ENCODE measurements at regions of chr1 and their contacts with region 1.

Region 1: GRCh38 chr1:22223176-22223575 is 80.3 kb upstream of the WNT4 start:
- DNase-seq: peak in 1 of 5 donors; percentile 11
- H3K4me3 ChIP-seq: no peak overlapping the region
- H3K27ac ChIP-seq: no peak overlapping the region
- H3K4me1 ChIP-seq: no peaks in the 10 kb centered on the region
- H3K27me3 ChIP-seq: no peaks in the 10 kb centered on the region
- CTCF ChIP-seq: no peak
- EP300 ChIP-seq: no peak
- POLR2A ChIP-seq: no peak

Region 2: GRCh38 chr1:22077728-22078127 is 145.4 kb before region 1 on chr1:
- intact Hi-C with region 1: no loop called
- DNase-seq: no peak
- H3K4me3 ChIP-seq: no peak overlapping the region
- H3K27ac ChIP-seq: no peak overlapping the region
- H3K4me1 ChIP-seq: peaks cover 12% of the 10 kb centered on the region
- H3K27me3 ChIP-seq: no peaks in the 10 kb centered on the region
- CTCF ChIP-seq: no peak
- EP300 ChIP-seq: no peak
- POLR2A ChIP-seq: no peak

Region 3: GRCh38 chr1:22163137-22163536 is 60.0 kb before region 1 on chr1:
- intact Hi-C with region 1: no loop called
- DNase-seq: no peak
- H3K4me3 ChIP-seq: no peak overlapping the region
- H3K27ac ChIP-seq: no peak overlapping the region
- H3K4me1 ChIP-seq: peaks cover 2% of the 10 kb centered on the region
- H3K27me3 ChIP-seq: no peaks in the 10 kb centered on the region
- CTCF ChIP-seq: no peak
- EP300 ChIP-seq: no peak
- POLR2A ChIP-seq: no peak

Region 4: GRCh38 chr1:22350171-22350909 is 127.2 kb after region 1 on chr1:
- intact Hi-C with region 1: no loop called
- DNase-seq: no peak
- H3K4me3 ChIP-seq: no peak overlapping the region
- H3K27ac ChIP-seq: no peak overlapping the region
- H3K4me1 ChIP-seq: peaks cover 1% of the 10 kb centered on the region
- H3K27me3 ChIP-seq: no peaks in the 10 kb centered on the region
- CTCF ChIP-seq: no peak
- EP300 ChIP-seq: no peak
- POLR2A ChIP-seq: no peak

Region 5: DNA sequence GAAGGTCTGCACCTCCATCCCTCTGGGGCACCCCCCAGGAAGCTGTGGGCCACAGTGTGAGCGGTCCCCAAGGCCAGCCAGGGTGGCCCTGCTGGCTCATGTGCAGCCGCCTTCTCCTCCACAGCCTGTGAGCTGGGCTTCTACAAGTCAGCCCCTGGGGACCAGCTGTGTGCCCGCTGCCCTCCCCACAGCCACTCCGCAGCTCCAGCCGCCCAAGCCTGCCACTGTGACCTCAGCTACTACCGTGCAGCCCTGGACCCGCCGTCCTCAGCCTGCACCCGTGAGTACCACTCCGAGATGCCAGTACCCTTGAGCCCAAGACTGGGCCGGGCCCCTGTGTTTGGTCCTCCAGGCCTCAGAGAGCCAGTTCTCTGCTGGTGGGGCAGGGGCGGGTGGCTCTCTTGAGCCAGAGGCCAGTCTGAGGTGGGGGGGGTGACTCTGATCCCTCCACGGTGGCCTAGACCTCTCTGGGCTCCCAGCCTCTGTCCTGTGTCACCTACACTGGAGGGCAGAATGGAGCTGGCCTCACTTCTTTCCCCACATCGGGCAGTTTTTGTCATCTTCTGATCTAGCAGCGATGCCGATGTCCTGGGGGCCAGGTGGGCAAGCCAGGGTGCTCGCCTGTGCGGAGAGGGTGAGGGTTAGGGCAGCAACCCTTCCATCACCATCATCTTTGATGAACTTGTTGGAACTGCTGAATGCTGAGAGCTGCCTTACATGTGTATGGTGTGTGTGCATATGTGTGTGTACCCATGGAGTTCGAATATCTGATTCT is 363.4 kb after region 1 on chr1:
- intact Hi-C with region 1: loop called in 1 of 4 experiments (anchors 5 kb)
- DNase-seq: no peak
- H3K4me3 ChIP-seq: no peak overlapping the region
- H3K27ac ChIP-seq: no peak overlapping the region
- H3K4me1 ChIP-seq: no peaks in the 10 kb centered on the region
- H3K27me3 ChIP-seq: no peaks in the 10 kb centered on the region
- CTCF ChIP-seq: no peak
- EP300 ChIP-seq: no peak
- POLR2A ChIP-seq: no peak

Region 6: DNA sequence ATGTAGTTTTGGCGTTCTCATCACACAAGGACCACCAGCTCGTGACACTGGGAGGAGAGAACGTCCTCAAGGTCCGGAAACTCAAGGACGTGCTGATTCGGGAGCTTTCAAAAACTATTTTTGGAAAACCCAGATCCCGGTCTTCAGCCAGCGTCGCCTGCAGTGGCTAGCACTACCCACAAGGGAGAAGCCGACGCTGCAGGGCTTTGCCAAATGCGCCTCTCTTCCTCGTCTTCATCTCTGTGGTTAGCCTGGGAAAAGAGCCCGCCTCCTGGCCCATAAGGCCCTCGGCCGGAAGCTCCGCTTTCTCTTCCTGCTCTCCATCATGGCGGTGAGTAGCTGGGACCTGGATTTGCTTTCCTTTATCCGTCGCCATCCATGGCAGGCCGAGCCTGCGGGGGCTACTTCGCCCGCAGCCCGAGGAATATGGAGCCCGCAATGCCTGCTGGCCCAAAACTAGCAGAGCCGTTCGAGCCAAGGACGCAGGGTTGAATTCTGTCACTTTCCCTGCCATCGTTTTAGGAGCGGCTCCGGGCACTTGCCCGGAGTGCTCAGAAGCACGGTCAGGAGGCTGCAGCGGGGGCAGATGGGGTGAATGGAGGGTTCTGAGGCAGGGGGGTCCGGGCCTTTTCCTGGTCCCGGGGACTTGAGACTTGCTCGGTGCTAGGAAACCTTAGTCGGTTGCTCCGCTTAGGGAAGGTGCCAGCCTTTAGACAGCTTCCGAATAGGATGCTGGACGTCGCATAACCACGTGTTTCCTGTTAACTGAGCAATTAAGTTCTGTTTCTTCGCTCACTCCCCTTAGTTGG is 1468.5 kb after region 1 on chr1 and contains the start of gene RPL11:
- intact Hi-C with region 1: no loop called
- DNase-seq: peak; percentile 91 to 94 (median 93)
- H3K4me3 ChIP-seq: peak within 1 kb of the TSS; percentile 54
- H3K27ac ChIP-seq: peak within 1 kb of the TSS; percentile 69 to 89
- H3K4me1 ChIP-seq: peaks cover 9% of the 10 kb centered on the region
- H3K27me3 ChIP-seq: no peaks in the 10 kb centered on the region
- CTCF ChIP-seq: peak; percentile 78 to 87 (median 86)
- EP300 ChIP-seq: no peak
- POLR2A ChIP-seq: peak; percentile 80
- total RNA-seq, gene RPL11: 1,656 to 2,751 (median 1,969) TPM